ENCODE measurements at regions of chr12 and their contacts with region 1.

Region 1: DNA sequence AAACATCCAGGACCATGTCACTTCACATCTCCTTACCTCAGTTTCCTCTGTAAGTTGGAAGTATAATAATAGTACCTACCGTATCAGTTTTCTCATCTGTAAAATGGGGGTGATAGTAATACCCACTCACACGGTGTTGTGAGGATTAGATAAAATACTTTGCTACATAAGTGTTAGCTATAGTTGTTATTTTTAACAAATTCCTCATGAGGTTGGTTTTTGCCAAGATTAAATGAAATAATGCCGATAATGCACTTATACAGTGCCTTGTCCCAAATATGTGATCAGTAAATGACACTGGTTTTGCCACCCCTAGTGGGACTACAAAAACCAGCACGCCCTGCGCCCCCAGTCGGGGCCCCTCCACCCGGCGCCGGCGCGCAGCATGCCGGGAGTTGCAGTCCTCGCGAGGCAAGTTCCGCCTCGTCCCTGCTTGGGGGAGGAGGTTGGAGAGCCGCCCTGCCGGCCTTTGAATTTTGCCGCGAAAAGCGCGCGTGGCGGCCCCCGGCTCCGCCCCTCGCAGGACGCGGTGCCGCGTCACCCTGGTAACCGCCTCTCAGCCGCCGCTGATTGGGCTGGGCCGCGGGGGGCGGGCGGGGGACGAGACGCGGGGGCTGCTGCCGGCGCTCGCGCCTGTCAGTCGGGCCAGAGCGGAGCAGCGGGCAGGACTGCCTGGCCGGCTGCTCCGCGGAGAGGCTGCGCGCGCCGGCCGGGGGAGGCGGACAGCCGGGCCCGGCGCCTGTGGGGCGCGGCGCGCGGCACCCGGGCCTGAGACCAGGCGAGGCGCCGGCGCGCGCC is at the start of gene FAM222A:
- DNase-seq: peak; percentile 96
- ATAC-seq: peak; percentile 85
- H3K4me3 Mint-ChIP-seq: peak within 1 kb of the TSS; percentile 80
- H3K27ac Mint-ChIP-seq: no peak within 1 kb of the TSS
- H3K4me1 Mint-ChIP-seq: peaks cover 12% of the 10 kb centered on the region
- H3K27me3 Mint-ChIP-seq: peaks cover 23% of the 10 kb centered on the region
- CTCF ChIP-seq: no peak
- total RNA-seq, gene FAM222A: 0.73 and 1.6 TPM in 2 replicates

Region 2: GRCh38 chr12:109154451-109155438 is 558.6 kb before region 1 on chr12:
- CTCF ChIA-PET with region 1: no interaction called
- POLR2A ChIA-PET with region 1: no interaction called
- intact Hi-C with region 1: loop called (anchors 10 kb)
- DNase-seq: peak; percentile 76
- ATAC-seq: peak; percentile 97
- H3K4me3 Mint-ChIP-seq: peak overlapping the region; percentile 95
- H3K27ac Mint-ChIP-seq: peak overlapping the region; percentile 90
- H3K4me1 Mint-ChIP-seq: peaks cover 24% of the 10 kb centered on the region
- H3K27me3 Mint-ChIP-seq: peaks cover 12% of the 10 kb centered on the region
- CTCF ChIP-seq: no peak

Region 3: DNA sequence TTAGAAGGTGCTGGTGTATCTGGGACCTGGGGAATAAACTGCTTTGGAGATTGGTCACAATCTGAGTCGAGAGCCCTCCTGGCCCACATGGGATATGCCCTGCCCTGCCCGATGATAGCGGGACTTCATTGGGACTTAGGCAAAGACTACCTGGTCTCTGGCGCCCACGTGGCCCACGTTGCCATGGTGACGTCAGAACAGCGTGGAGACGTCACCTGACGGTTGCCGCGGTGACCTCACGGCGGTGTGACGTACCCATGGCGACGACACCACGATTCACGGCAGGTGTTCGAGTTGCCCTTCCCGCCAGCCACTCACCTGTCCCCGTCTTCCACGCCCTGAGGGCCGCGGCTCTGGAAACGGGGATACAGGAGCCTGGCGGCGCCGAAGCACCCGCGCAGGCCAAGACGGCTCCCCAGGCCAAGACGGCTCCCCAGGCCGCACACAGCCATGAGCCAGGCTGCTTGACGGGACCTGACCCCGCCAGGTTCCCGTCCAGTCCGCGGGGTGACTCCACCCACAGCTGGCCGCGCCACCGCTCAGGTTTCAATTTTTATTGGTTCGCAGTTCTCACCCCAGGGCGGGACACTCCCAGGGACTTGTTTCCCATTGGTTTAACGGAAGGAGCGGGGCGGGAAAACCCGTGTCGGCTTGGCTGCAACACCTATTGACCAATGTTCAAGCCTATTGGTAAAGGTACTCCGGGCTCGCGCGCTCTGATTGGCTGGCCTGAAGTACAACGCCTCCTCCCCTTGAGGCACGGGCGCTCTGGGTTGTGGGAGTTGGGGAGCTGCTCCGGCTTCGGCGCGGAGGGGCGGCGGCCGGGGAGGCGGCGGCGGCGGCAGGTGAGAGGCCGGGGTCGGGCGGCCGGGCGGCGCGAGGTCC is 140.1 kb before region 1 on chr12 and contains the starts of genes MMAB and MVK:
- CTCF ChIA-PET with region 1: interaction called, 3 read pairs
- POLR2A ChIA-PET with region 1: interaction called, 5 read pairs
- intact Hi-C with region 1: loop called (anchors 1 kb)
- DNase-seq: peak; percentile 92
- ATAC-seq: peak; percentile 94
- H3K4me3 Mint-ChIP-seq: peak within 1 kb of the TSS; percentile 93
- H3K27ac Mint-ChIP-seq: peak within 1 kb of the TSS; percentile 90
- H3K4me1 Mint-ChIP-seq: peaks cover 25% of the 10 kb centered on the region
- H3K27me3 Mint-ChIP-seq: no peaks in the 10 kb centered on the region
- CTCF ChIP-seq: no peak
- total RNA-seq, gene MMAB: 62.8 and 63.3 TPM in 2 replicates
- total RNA-seq, gene MVK: 28.5 and 30.3 TPM in 2 replicates

Region 4: GRCh38 chr12:109775172-109775881 is 61.9 kb after region 1 on chr12:
- CTCF ChIA-PET with region 1: no interaction called
- POLR2A ChIA-PET with region 1: no interaction called
- intact Hi-C with region 1: loop called (anchors 1 kb)
- DNase-seq: peak; percentile 54
- ATAC-seq: peak; percentile 52
- H3K4me3 Mint-ChIP-seq: no peak overlapping the region
- H3K27ac Mint-ChIP-seq: no peak overlapping the region
- H3K4me1 Mint-ChIP-seq: peaks cover 8% of the 10 kb centered on the region
- H3K27me3 Mint-ChIP-seq: no peaks in the 10 kb centered on the region
- CTCF ChIP-seq: no peak

Region 5: DNA sequence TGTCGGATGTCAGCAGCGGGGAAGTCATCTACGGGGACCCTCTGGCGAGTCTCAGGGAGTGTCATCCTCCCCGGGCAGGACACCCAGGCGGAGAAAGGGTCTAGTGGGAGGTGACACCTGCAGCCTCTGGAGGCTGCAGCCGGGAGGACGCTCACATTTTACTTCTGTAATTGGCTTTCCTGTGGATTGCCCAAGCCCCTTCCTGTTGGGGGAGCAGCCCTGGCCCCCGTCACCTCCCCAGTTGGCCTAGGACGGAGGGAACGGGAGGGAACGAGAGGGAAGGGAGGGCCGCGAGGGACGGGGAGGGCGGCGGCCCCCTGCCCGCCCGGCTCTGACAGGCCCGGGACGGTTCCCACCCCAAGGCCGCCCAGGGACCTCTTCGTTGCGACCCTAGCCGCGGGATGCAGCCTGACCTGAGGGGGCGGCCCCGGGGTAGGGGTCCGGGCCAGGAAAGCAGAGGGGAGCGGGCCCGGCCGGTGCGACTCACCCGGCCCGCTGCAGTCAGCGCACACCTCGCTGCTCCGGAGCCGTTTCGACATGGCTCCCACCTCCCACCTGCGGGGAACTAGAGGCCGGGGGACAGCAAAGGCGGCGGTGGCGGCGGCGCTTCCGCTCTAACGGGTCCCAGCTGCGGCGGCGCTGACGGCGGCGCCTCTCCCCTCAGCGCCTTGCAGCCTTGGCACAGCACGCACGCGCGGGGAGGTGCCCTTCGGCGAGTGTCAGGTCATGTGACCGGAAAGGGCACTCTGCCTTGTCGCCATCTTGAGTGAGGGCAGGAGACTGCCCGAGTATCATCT is 282.5 kb after region 1 on chr12 and contains the start of gene GIT2:
- CTCF ChIA-PET with region 1: no interaction called
- POLR2A ChIA-PET with region 1: no interaction called
- intact Hi-C with region 1: loop called (anchors 1 kb)
- DNase-seq: peak; percentile 86
- ATAC-seq: peak; percentile 72
- H3K4me3 Mint-ChIP-seq: peak within 1 kb of the TSS; percentile 96
- H3K27ac Mint-ChIP-seq: peak within 1 kb of the TSS; percentile 95
- H3K4me1 Mint-ChIP-seq: peaks cover 80% of the 10 kb centered on the region
- H3K27me3 Mint-ChIP-seq: no peaks in the 10 kb centered on the region
- CTCF ChIP-seq: no peak
- total RNA-seq, gene GIT2: 89.2 and 107 TPM in 2 replicates

Measured in activated B cell treated with CpG ODN at 0.5 μM for 24 hours (primary cell).